Mammary epithelial cell (primary cell): ENCODE measurements at regions of chr16 and their contacts with region 1.

Region 1: DNA sequence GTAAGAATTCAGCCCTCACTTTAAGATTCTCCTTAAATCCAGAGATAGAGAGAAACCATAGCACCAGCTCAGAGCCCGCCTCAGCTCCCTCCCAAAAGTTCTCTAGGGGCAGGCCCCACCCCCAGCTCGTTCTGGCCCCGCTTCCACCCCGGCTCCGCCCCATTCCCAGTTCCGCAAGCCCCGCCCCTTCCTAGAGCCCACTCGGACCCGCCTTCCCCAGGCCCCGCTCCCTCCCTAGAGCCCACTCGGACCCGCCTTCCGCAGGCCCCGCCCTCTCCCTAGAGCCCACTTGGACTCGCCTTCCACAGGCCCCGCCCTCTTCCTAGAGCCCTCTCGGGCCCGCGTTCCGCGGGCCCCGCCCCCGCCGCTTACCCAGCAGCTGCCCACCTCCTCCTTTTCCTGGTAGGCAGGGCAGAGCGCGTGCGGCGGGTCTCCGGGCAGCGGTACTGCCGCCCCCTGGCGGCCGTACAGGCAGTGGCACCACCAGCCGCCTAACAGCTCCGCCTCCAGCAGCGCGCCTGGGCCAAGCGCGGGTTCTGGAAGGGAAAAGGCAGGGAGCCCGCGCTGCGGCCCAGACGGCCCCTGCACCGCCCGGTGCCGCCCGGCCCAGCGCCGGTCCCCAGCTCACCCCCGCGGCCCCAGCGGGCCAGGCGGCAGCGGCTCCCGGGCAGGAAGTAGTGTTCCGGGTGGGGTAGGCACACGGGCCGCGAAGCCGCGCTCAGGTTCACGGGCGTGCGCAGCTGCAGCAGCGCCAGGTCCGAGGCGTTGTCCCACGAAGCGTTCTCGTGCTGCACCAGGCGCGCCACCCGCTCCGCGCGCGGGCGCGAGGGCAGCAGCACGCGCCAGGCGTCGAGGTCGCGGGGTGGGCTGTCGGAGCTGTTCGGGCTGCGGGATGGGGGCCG is 6.8 kb upstream of the PRSS8 start:
- DNase-seq: peak; percentile 98
- H3K4me3 ChIP-seq: peak overlapping the region; percentile 15 to 40 (median 37)
- H3K27ac ChIP-seq: peak overlapping the region; percentile 55
- H3K4me1 ChIP-seq: peaks cover 38% of the 10 kb centered on the region
- H3K27me3 ChIP-seq: no peaks in the 10 kb centered on the region
- CTCF ChIP-seq: peak; percentile 78 to 96

Region 2: DNA sequence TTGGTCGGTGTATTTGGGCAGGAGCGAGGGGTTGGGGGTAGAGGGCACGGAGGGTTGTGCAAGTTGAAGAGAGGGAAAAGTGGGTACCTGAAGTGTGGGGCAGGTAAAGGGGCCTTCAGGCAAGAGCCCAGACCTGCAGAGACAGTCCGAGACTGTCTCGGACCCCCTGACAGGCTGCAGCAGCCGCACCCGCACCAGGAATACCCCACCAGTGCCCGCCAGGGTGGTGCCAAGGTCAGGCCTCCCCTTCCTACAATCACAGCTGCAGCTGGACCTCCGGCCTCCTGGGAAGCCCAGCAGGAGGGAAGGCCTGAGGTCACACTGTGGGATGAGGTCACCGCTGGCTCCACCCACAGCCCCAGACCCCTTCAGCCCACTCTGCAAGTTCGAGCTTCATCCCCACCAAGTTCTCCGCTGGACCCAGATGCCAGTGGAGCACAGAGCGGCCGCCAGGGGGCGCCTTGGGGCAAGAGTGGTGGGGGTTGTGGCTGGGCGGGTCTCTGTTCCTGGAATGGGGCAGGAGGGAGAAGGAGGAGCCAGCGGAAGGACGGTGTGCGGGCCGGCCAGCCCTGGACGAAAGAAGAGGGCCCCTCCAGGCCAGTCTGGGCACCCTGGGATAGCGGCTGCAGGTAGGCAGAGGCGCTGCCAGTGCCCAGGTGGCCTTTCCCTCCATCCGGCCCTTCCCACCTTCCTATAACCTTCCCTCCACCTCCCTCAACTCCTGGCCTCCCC is 157.5 kb before region 1 on chr16 and contains the start of gene HSD3B7:
- CTCF ChIA-PET with region 1: interaction called, 3 read pairs
- dilution Hi-C with region 1: no loop called
- in situ Hi-C with region 1: loop called in 1 of 2 experiments (anchors 25 kb)
- intact Hi-C with region 1: loop called (anchors 1 kb)
- DNase-seq: peak; percentile 64
- H3K4me3 ChIP-seq: peak within 1 kb of the TSS; percentile 22 to 54 (median 44)
- H3K27ac ChIP-seq: no peak within 1 kb of the TSS
- H3K4me1 ChIP-seq: peaks cover 12% of the 10 kb centered on the region
- H3K27me3 ChIP-seq: no peaks in the 10 kb centered on the region
- CTCF ChIP-seq: peak; percentile 84 to 96
- total RNA-seq, gene HSD3B7: 3.8 to 3.9 TPM

Region 3: DNA sequence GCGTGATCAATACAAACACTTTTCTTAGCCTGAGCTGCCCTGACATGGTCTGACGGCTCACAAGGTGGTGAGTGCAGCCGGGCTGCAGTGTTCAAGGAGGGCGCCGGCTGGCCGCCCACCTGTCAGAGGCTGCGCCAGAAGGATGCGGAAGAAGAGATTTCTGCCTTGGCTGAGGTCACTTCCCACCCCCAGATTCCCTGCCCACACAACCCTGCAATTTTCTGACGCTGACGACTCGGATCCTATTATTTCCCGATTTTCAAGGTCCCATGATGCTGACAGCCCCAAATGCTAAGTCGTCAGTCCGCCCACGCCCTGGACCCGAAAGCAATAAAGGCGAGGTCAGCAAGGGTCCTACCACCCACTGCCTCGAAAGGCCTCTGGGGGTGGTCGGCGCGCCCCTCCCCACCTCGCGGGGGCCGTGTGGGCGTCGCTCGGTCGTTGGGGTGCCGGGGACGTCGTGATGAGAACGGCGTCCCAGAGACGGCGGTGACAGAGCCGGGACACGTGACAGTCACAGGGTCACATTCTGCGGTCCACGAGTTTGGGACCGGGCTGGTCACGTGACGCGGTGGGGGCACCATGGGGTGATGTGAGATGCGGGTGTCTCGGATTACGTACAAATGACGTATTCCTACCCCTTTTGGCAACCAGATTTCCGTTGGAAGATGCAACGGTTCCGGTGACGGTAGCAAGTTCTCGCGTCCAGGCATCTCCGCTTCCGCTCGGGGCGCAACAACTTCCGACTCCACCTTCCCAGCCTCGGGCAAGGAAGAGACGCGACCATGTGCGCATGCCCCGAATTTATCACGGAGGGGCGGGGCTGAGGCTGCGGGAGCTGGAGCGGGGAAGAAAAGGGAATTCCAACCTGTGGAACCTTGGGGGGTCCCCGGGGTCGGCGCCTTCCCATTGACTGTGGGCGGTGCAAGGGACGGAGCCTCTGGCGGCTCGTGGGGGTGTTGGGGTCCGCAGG is 109.3 kb before region 1 on chr16 and contains the start of gene STX4:
- CTCF ChIA-PET with region 1: interaction called, 3 read pairs
- dilution Hi-C with region 1: loop called (anchors 10 kb)
- in situ Hi-C with region 1: no loop called
- intact Hi-C with region 1: loop called (anchors 2 kb)
- DNase-seq: peak; percentile 95
- H3K4me3 ChIP-seq: peak within 1 kb of the TSS; percentile 82 to 94 (median 89)
- H3K27ac ChIP-seq: peak within 1 kb of the TSS; percentile 78
- H3K4me1 ChIP-seq: peaks cover 12% of the 10 kb centered on the region
- H3K27me3 ChIP-seq: no peaks in the 10 kb centered on the region
- CTCF ChIP-seq: no peak
- total RNA-seq, gene STX4: 13.3 to 64.3 TPM

Region 4: DNA sequence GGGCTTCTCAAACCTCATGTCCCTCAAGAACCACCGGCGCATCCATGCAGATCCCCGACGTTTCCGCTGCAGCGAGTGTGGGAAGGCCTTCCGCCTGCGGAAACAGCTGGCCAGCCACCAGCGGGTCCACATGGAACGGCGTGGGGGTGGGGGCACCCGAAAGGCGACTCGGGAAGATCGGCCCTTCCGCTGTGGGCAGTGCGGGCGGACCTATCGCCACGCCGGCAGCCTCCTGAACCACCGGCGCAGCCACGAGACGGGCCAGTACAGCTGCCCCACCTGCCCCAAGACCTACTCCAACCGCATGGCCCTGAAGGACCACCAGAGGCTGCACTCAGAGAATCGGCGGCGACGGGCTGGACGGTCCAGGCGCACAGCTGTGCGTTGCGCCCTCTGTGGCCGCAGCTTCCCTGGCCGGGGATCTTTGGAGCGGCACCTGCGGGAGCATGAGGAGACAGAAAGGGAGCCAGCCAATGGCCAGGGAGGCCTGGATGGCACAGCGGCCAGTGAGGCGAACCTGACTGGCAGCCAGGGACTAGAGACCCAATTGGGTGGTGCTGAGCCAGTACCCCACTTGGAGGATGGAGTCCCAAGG is 62.2 kb before region 1 on chr16:
- CTCF ChIA-PET with region 1: no interaction called
- dilution Hi-C with region 1: no loop called
- in situ Hi-C with region 1: no loop called
- intact Hi-C with region 1: no loop called
- DNase-seq: no peak
- H3K4me3 ChIP-seq: no peak overlapping the region
- H3K27ac ChIP-seq: no peak overlapping the region
- H3K4me1 ChIP-seq: peaks cover 1% of the 10 kb centered on the region
- H3K27me3 ChIP-seq: no peaks in the 10 kb centered on the region
- CTCF ChIP-seq: no peak

Region 5: GRCh38 chr16:31094424-31095120 is 47.8 kb before region 1 on chr16 and contains the start of gene VKORC1:
- CTCF ChIA-PET with region 1: interaction called, 10 read pairs
- dilution Hi-C with region 1: no loop called
- in situ Hi-C with region 1: no loop called
- intact Hi-C with region 1: loop called (anchors 1 kb)
- DNase-seq: peak; percentile 99
- H3K4me3 ChIP-seq: peak within 1 kb of the TSS; percentile 57 to 98 (median 71)
- H3K27ac ChIP-seq: peak within 1 kb of the TSS; percentile 81
- H3K4me1 ChIP-seq: peaks cover 4% of the 10 kb centered on the region
- H3K27me3 ChIP-seq: no peaks in the 10 kb centered on the region
- CTCF ChIP-seq: no peak
- total RNA-seq, gene VKORC1: 45.7 to 65.0 TPM

Region 6: DNA sequence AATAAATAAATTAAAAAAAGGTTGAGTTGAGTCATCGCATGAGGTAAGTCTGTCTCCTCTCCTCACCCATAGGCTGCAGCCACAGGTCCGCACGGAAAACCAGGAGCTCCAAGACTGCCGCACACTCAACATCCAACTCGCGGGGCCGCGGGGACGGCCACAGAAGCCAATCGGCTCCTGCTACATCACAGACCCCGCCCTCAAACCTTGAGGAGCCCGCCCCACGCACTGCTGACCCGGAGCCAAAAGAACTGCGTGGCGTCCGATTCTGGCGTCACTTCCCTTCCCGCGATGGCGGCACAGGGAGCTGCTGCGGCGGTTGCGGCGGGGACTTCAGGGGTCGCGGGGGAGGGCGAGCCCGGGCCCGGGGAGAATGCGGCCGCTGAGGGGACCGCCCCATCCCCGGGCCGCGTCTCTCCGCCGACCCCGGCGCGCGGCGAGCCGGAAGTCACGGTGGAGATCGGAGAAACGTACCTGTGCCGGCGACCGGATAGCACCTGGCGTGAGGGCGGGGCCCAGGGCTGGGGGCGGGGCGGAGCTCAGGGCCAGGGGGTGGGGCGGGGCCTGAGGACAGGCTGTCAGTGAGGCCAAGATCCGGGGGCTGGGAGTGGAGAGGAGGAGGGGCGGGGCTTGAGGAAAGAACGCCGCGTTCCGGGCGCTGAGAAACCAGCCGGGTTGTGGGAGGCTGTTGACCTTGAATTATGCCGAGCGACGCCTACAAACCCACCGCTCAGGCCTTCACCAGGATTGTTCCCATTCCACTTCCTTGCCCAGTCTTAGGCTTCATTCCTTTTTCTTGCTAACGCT is 24.8 kb before region 1 on chr16 and contains the start of gene KAT8:
- CTCF ChIA-PET with region 1: interaction called, 5 read pairs
- dilution Hi-C with region 1: no loop called
- in situ Hi-C with region 1: no loop called
- intact Hi-C with region 1: loop called (anchors 1 kb)
- DNase-seq: peak; percentile 98
- H3K4me3 ChIP-seq: peak within 1 kb of the TSS; percentile 57 to 80 (median 65)
- H3K27ac ChIP-seq: peak within 1 kb of the TSS; percentile 100
- H3K4me1 ChIP-seq: peaks cover 14% of the 10 kb centered on the region
- H3K27me3 ChIP-seq: no peaks in the 10 kb centered on the region
- CTCF ChIP-seq: no peak
- total RNA-seq, gene KAT8: 22.7 to 34.0 TPM

Region 7: DNA sequence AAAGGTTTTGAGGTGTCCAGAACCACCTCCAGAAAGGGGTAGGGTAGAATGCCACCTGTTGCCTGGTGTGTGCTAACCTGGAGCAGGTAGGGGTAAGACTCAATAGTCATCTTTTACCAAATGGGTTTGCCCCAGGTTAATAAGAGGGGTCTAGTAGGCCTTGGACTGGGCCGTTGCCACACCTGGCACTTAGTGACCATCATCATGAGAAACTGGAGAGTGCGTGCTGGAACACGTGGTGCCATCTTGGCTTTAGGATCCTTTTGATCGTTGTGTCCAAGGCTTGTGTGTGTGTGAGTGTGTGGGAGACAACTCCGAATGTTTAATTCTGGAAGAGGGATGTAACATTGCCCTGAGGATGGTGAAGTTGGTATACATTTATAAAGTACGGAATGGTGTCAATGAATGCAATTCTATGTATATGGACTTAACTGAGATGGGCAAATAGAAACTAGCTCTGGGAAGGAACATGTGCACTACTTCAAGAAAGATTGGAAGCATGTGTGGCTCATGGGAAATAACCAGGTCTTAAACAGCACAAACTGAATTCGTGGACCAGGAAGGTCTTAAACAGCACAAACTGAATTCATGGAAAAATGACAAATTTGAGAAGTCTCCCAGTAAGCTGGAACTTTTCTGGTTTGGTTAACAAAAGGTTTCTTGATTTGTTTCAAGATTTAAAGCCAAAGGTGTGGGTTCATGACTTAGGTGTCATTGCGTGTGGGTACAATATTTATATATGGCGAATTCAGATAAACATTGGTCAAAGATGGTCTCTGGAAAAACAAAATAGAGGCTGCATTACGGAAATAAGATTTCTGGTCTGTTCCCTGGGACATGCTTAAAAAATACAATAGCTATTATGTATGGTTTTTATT is 44.8 kb after region 1 on chr16:
- CTCF ChIA-PET with region 1: no interaction called
- dilution Hi-C with region 1: no loop called
- in situ Hi-C with region 1: no loop called
- intact Hi-C with region 1: no loop called
- DNase-seq: no peak
- H3K4me3 ChIP-seq: no peak overlapping the region
- H3K27ac ChIP-seq: no peak overlapping the region
- H3K4me1 ChIP-seq: peaks cover 16% of the 10 kb centered on the region
- H3K27me3 ChIP-seq: no peaks in the 10 kb centered on the region
- CTCF ChIP-seq: no peak

Region 8: DNA sequence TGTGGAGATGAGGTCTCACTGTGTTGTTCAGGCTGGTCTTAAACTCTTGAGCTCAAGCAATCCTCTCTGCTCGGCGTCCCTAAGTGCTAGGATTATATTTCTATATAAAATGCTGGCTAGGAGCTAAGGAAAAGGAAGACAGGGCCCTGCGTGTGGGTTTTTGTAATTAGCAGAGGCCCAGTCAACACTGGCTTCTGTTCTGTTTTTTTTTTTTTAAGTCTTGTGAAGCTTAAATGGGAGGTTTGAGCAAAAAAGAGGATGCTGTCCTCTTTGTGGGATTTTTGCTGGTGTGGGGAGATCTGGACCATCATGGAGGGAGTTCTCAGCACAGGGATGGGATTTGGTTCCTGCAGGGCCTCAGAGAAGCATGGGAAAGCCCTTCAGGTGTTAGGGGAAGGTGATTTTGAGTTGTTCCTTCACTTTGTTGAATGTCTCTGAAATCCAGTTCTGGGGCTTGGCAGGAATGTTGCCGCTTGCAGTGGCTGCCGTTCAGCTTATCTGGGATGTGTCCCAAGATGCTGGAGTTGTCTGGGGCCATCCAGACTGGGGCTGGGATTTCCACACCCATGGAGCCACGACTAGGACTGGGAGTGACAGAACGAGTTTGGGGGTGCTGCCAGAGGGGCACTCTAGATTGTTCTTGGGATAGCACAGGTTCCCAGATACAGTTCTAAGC is 56.0 kb after region 1 on chr16:
- CTCF ChIA-PET with region 1: no interaction called
- dilution Hi-C with region 1: no loop called
- in situ Hi-C with region 1: no loop called
- intact Hi-C with region 1: no loop called
- DNase-seq: no peak
- H3K4me3 ChIP-seq: no peak overlapping the region
- H3K27ac ChIP-seq: no peak overlapping the region
- H3K4me1 ChIP-seq: peaks cover 16% of the 10 kb centered on the region
- H3K27me3 ChIP-seq: no peaks in the 10 kb centered on the region
- CTCF ChIP-seq: no peak

Region 9: DNA sequence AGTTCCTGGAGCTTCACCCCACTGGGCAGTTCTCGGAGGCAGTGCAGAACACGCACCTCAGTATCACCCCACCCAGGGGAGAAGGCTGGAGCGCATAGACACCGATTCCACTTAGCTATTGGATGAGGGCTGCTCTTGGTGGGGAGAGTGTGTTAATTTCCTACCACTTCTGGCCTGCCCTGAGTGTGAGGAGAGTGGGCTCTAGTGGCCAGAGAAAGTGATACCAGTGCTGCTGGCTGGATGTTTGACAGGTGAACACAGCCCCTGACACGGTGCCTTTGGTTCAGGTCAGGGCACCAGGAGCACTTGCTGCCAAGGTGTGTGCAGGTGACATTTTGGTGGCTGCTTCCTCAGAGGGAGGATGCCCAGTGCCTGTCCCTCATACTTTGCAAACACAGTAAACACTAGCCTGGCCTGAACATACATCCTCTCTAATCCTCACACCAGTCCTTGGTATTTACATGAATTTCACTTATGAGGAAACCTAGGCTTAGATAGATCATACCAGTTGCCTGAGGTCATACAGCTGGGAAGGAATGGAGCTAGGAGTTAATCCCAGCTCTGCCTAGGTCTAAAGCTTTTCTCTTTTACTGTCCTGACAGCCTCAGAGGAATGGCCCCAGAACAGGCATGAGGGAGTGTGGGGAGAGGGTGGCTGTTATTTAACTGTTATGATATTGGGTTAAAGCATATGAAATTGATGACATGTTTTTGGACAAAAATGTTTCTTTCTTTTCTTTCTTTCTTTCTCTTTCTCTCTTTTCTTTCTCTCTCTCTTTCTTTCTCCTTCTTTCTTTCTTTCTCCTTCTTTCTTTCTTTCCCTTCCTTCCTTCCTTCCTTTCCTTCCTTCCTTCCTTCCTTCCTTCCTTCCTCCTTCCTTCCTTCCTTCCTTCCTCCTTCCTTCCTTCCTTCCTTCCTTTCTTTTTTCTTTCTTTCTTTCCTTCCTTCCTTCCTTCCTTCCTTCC is 191.6 kb after region 1 on chr16:
- CTCF ChIA-PET with region 1: interaction called, 4 read pairs
- dilution Hi-C with region 1: no loop called
- in situ Hi-C with region 1: no loop called
- intact Hi-C with region 1: loop called (anchors 5 kb)
- DNase-seq: peak; percentile 17
- H3K4me3 ChIP-seq: no peak overlapping the region
- H3K27ac ChIP-seq: no peak overlapping the region
- H3K4me1 ChIP-seq: peaks cover 6% of the 10 kb centered on the region
- H3K27me3 ChIP-seq: peaks cover 22% of the 10 kb centered on the region
- CTCF ChIP-seq: peak; percentile 37 to 63